ENCODE measurements at regions of chr19 and their contacts with region 1.

Region 1: DNA sequence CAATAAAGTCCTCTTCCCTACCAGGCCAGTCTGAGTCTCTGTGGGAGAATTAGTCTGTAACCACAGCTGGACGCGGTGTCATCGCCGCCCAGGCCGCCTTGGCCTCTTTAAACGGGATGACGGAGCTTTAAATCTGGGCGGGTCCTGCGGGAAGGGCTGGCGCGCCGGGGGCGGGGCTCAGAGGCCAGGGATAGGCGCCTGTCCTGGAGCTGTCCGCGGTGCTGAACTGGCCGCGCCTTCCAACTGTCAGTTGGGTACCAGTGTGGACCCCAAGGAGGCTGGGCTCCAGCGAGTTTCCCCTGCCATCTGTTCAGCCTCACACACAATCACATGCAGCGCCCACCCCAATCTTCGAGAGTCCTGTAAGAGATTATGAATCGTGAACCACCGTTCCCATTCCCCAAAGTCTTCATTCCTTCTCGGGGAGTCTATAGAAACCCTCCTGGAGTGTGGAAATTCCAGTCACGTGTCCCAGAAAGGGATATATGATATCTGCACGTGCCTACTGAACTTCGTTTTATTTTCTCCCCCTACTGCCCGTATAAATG is 11.5 kb downstream of the APLP1 start:
- DNase-seq: peak; percentile 93
- ATAC-seq: peak; percentile 93 to 94
- H3K4me3 ChIP-seq: no peak overlapping the region
- H3K27ac ChIP-seq: no peak overlapping the region
- H3K4me1 ChIP-seq: peaks cover 4% of the 10 kb centered on the region
- H3K27me3 ChIP-seq: peaks cover 8% of the 10 kb centered on the region
- CTCF ChIP-seq: no peak

Region 2: GRCh38 chr19:35797663-35798062 is 82.2 kb before region 1 on chr19:
- intact Hi-C with region 1: no loop called
- DNase-seq: no peak
- ATAC-seq: peak; percentile 18 to 24
- H3K4me3 ChIP-seq: peak overlapping the region; percentile 6
- H3K27ac ChIP-seq: no peak overlapping the region
- H3K4me1 ChIP-seq: no peaks in the 10 kb centered on the region
- H3K27me3 ChIP-seq: peaks cover 31% of the 10 kb centered on the region
- CTCF ChIP-seq: no peak

Region 3: GRCh38 chr19:35843676-35844481 is 36.0 kb before region 1 on chr19:
- intact Hi-C with region 1: no loop called
- DNase-seq: no peak
- ATAC-seq: peak; percentile 9 to 37
- H3K4me3 ChIP-seq: no peak overlapping the region
- H3K27ac ChIP-seq: no peak overlapping the region
- H3K4me1 ChIP-seq: peaks cover 14% of the 10 kb centered on the region
- H3K27me3 ChIP-seq: peaks cover 54% of the 10 kb centered on the region
- CTCF ChIP-seq: no peak

Region 4: GRCh38 chr19:35931161-35931873 is 51.5 kb after region 1 on chr19:
- intact Hi-C with region 1: loop called (anchors 5 kb)
- DNase-seq: peak; percentile 100
- ATAC-seq: peak; percentile 99 to 100
- H3K4me3 ChIP-seq: peak overlapping the region; percentile 37
- H3K27ac ChIP-seq: peak overlapping the region; percentile 73
- H3K4me1 ChIP-seq: peaks cover 24% of the 10 kb centered on the region
- H3K27me3 ChIP-seq: peaks cover under 1% of the 10 kb centered on the region
- CTCF ChIP-seq: peak; percentile 77

Region 5: DNA sequence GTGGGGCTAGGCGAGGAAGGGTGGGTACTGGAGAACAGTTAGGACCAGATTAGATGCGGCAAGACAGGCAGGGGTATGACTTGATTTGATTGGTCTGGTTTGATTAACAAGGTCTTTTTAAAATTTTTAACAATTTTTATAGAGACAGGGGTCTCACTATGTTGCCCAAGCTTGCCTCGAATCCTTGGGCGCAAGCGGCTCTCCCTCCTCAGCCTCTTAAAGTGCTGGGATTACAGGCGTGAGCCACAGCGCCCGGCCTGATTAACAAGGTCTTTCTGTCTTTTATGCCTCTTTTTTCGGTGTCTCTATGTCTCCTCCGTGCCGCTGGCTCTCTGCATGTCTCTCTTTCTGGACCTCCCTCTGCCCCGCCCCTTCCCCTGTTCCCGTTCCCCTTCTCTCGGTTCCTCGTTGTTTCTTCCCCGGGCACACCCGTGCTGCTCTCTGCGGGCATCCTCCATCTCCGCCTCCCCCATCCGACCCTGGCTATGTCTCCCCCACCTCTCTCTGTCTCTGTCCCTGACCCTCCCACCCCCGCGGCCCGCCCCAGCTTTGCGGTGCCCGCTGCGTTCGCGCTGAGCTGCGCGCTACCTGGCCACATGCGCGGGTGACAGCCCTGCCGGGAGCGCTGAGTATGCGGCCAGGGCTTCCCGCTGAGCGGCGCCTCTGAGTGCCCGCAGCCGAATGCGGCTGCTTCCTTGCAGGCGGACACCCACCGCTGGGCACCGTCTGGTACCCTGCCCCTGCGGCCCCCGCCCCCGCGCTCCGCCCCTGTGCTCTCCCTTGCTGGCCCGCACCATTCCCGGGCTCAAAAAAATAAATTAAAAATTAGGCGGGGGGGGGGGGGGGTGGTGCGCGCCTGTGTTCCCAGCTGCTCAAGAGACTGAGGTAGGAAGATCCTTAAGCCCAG is 107.1 kb after region 1 on chr19:
- intact Hi-C with region 1: no loop called
- DNase-seq: peak; percentile 68
- ATAC-seq: peak; percentile 62 to 64
- H3K4me3 ChIP-seq: peak overlapping the region; percentile 38
- H3K27ac ChIP-seq: no peak overlapping the region
- H3K4me1 ChIP-seq: peaks cover 8% of the 10 kb centered on the region
- H3K27me3 ChIP-seq: peaks cover 27% of the 10 kb centered on the region
- CTCF ChIP-seq: no peak